ENCODE measurements at regions of chr2 and their contacts with region 1.

Region 1: GRCh38 chr2:74653985-74654882 is at the start of gene SEMA4F:
- DNase-seq: peak; percentile 94
- ATAC-seq: peak; percentile 99
- H3K4me3 ChIP-seq: peak within 1 kb of the TSS; percentile 56 to 90 (median 80)
- H3K4me3 Mint-ChIP-seq: peak within 1 kb of the TSS; percentile 95
- H3K27ac ChIP-seq: peak within 1 kb of the TSS in 1 of 2 donors; percentile 53
- H3K27ac Mint-ChIP-seq: peak within 1 kb of the TSS; percentile 85
- H3K4me1 ChIP-seq: peaks cover 8 to 13% of the 10 kb centered on the region in 2 donors
- H3K4me1 Mint-ChIP-seq: peaks cover 18% of the 10 kb centered on the region
- H3K27me3 ChIP-seq: peaks cover 0 to 7% (median 3%) of the 10 kb centered on the region in 4 experiments
- H3K27me3 Mint-ChIP-seq: peaks cover 5% of the 10 kb centered on the region
- CTCF ChIP-seq: no peak
- total RNA-seq, gene SEMA4F: 18.9 and 19.3 TPM in 2 replicates

Region 2: DNA sequence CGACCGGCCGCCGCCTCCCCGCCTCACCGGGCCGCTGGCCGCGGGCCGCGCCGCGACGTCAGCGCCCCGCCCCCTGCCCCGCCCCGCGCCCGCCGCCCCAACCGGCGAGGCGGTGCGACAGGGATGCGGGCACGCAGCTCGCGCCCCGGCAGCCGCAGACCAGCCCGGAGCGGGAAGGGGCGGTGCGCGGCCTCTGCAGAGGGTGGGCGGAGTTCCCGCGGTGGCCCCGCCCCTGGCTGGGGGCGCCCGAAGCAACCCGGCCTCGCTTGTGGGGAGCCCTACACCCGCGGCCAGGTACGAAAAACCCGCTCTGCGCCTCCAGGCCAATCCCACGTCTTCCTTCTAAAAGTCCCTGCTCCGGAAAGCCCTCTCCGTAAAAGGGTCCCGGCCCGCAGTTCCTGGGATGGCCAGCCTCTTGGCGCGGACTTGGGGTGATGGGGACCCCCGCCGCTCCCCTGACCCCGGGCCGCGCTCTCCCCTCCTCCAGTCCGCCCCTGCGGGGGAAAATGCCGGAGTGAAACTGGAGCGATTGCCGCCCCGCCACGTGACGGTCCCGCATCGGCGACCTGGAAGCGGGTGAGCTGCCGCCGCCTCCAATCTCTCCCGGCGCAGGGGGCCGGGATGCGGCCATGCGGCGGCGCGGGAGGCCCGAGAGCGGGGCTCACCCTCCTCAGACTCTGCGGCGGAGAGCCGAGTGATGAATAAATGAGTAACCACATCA is 1541.2 kb before region 1 on chr2 and contains the start of gene RAB11FIP5:
- CTCF ChIA-PET with region 1: no interaction called
- POLR2A ChIA-PET with region 1: no interaction called
- intact Hi-C with region 1: loop called (anchors 5 kb)
- DNase-seq: peak; percentile 83
- ATAC-seq: peak; percentile 91
- H3K4me3 ChIP-seq: peak within 1 kb of the TSS; percentile 15 to 89 (median 74)
- H3K4me3 Mint-ChIP-seq: peak within 1 kb of the TSS; percentile 83
- H3K27ac ChIP-seq: peak within 1 kb of the TSS in 1 of 2 donors; percentile 53
- H3K27ac Mint-ChIP-seq: peak within 1 kb of the TSS; percentile 67
- H3K4me1 ChIP-seq: peaks cover 17% of the 10 kb centered on the region in 2 donors
- H3K4me1 Mint-ChIP-seq: peaks cover 8% of the 10 kb centered on the region
- H3K27me3 ChIP-seq: peaks cover 0 to 23% (median 8%) of the 10 kb centered on the region in 4 experiments
- H3K27me3 Mint-ChIP-seq: peaks cover 3% of the 10 kb centered on the region
- CTCF ChIP-seq: no peak
- total RNA-seq, gene RAB11FIP5: 4.6 and 5.1 TPM in 2 replicates

Region 3: GRCh38 chr2:73736855-73737779 is 917.1 kb before region 1 on chr2 and contains the start of gene TPRKB:
- CTCF ChIA-PET with region 1: no interaction called
- POLR2A ChIA-PET with region 1: no interaction called
- intact Hi-C with region 1: loop called (anchors 1 kb)
- DNase-seq: peak; percentile 95
- ATAC-seq: peak; percentile 99
- H3K4me3 ChIP-seq: peak within 1 kb of the TSS; percentile 68 to 97 (median 88)
- H3K4me3 Mint-ChIP-seq: peak within 1 kb of the TSS; percentile 91
- H3K27ac ChIP-seq: peak within 1 kb of the TSS; percentile 59 to 78
- H3K27ac Mint-ChIP-seq: peak within 1 kb of the TSS; percentile 83
- H3K4me1 ChIP-seq: peaks cover 8 to 15% of the 10 kb centered on the region in 2 donors
- H3K4me1 Mint-ChIP-seq: peaks cover 16% of the 10 kb centered on the region
- H3K27me3 ChIP-seq: no peaks in the 10 kb centered on the region
- H3K27me3 Mint-ChIP-seq: no peaks in the 10 kb centered on the region
- CTCF ChIP-seq: no peak
- total RNA-seq, gene TPRKB: 24.3 and 31.2 TPM in 2 replicates

Region 4: DNA sequence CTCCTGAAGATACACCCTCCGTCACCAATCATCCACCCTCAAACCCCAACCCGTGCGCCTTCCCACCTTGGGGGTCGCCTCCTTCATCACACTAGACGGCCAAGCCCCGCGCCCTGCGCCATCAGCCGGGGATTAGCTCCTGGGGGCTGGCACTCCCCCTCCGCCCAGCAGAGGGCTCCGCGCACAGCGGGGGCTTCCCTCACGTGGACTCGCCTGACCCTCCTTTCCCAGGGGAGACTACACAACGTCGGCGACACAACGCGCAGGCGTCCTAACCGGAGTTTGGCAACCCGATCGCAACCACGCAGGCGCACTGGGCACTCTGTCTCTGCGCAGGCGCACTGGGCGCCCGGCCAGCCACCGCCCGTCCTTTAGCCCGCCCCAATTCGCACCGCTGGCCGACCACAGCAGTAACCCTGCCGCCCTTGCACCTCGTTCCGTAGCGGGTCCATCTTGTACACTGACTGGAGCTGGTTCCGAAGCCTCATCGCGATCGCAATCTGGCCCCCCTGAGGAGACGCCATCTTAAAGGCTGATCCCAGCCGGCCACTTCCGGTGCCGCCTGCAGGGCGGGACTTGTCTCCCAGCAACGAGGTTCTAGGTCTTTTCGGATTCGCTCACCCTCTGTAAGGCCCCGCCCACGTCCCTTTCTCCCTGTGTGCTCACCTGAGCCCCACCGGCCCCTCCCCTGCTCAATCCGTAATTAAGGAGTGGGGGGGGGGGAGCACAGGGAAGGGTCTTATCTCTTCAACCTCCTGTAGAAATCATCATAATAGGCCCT is 146.9 kb before region 1 on chr2 and contains the start of gene PCGF1:
- CTCF ChIA-PET with region 1: no interaction called
- POLR2A ChIA-PET with region 1: interaction called, 5 read pairs
- intact Hi-C with region 1: loop called (anchors 5 kb)
- DNase-seq: peak; percentile 100
- ATAC-seq: peak; percentile 85
- H3K4me3 ChIP-seq: peak within 1 kb of the TSS; percentile 78 to 97 (median 83)
- H3K4me3 Mint-ChIP-seq: peak within 1 kb of the TSS; percentile 96
- H3K27ac ChIP-seq: peak within 1 kb of the TSS; percentile 91 to 96
- H3K27ac Mint-ChIP-seq: peak within 1 kb of the TSS; percentile 99
- H3K4me1 ChIP-seq: peaks cover 31 to 38% of the 10 kb centered on the region in 2 donors
- H3K4me1 Mint-ChIP-seq: peaks cover 56% of the 10 kb centered on the region
- H3K27me3 ChIP-seq: peaks cover 0 to 56% (median 14%) of the 10 kb centered on the region in 4 experiments
- H3K27me3 Mint-ChIP-seq: peaks cover 41% of the 10 kb centered on the region
- CTCF ChIP-seq: peak; percentile 64
- total RNA-seq, gene PCGF1: 34.3 and 40.1 TPM in 2 replicates

Region 5: DNA sequence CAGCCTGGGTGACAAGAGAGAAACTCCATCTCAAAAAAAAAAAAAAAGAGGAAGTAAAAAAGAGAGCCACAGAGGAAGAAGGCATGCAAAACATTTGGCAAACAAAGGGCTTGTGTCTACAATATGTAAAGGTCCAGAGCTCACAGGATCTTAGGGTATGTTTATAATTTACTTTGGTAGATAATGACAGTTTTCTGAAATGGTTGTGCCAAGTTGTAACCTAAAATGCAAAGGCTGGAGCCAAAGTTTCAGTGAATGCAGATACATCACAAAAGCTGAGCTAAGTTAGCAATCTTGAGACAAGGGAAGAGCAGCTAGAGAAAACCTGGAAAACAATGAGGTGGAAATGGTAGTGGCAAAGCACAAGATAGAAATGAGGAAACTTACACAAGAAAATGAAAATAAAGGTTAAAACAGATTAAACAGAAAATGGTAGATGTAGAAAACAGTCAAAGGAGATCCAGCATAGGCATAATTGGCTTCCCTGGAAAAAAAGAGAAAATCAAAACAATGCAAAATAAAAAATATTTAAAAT is 102.2 kb after region 1 on chr2:
- CTCF ChIA-PET with region 1: no interaction called
- POLR2A ChIA-PET with region 1: no interaction called
- intact Hi-C with region 1: no loop called
- DNase-seq: peak; percentile 37
- ATAC-seq: peak; percentile 56
- H3K4me3 ChIP-seq: peak overlapping the region in 1 of 5 experiments; percentile 25
- H3K4me3 Mint-ChIP-seq: peak overlapping the region; percentile 41
- H3K27ac ChIP-seq: no peak overlapping the region
- H3K27ac Mint-ChIP-seq: peak overlapping the region; percentile 60
- H3K4me1 ChIP-seq: peaks cover 7 to 8% of the 10 kb centered on the region in 2 donors
- H3K4me1 Mint-ChIP-seq: peaks cover 11% of the 10 kb centered on the region
- H3K27me3 ChIP-seq: peaks cover 0 to 4% (median 0%) of the 10 kb centered on the region in 4 experiments
- H3K27me3 Mint-ChIP-seq: peaks cover 23% of the 10 kb centered on the region
- CTCF ChIP-seq: no peak

Region 6: DNA sequence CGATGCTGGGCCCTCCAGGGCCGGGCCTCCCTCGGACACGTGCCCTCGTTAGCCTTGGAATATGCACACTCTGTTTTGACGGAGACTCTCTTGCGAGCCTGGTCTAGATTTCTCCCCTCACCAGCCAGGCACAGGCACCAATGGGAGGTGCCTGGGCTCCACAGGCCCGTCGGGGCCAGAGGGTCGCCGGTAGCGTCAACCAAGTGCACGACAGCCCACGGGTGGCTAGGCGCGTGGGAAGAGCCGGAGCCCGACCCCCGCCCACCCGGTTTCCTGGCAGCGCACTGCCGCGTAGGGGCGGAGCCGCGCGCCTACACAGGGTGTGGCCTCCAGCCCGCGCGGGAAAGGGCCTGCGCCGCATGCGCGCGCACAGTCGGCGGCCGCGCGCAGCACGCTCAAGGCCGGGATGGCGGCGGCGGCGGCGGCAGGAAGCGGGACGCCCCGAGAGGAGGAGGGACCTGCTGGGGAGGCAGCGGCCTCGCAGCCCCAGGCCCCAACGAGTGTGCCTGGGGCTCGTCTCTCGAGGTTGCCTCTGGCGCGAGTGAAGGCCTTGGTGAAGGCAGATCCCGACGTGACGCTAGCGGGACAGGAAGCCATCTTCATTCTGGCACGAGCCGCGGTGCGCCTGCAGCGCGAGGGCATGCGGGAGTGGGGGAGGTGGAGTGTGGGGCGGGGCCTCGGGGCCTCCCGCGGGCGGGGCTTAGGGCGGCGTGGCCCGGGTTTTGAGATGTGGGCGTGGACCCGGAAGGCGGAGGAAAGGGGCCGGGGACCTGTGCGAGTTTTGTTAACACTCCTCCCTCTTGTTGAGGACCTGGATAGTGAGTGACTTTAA is 304.3 kb after region 1 on chr2 and contains the start of gene POLE4:
- CTCF ChIA-PET with region 1: no interaction called
- POLR2A ChIA-PET with region 1: no interaction called
- intact Hi-C with region 1: loop called (anchors 1 kb)
- DNase-seq: peak; percentile 96
- ATAC-seq: peak; percentile 91
- H3K4me3 ChIP-seq: peak within 1 kb of the TSS; percentile 44 to 80 (median 65)
- H3K4me3 Mint-ChIP-seq: peak within 1 kb of the TSS; percentile 88
- H3K27ac ChIP-seq: peak within 1 kb of the TSS; percentile 83 to 92
- H3K27ac Mint-ChIP-seq: peak within 1 kb of the TSS; percentile 91
- H3K4me1 ChIP-seq: peaks cover 6 to 17% of the 10 kb centered on the region in 2 donors
- H3K4me1 Mint-ChIP-seq: peaks cover 72% of the 10 kb centered on the region
- H3K27me3 ChIP-seq: no peaks in the 10 kb centered on the region
- H3K27me3 Mint-ChIP-seq: no peaks in the 10 kb centered on the region
- CTCF ChIP-seq: no peak
- total RNA-seq, gene POLE4: 53.3 and 56.0 TPM in 2 replicates

Measured in B cell (primary cell).